ENCODE measurements at regions of chr5 and their contacts with region 1.

Region 1: DNA sequence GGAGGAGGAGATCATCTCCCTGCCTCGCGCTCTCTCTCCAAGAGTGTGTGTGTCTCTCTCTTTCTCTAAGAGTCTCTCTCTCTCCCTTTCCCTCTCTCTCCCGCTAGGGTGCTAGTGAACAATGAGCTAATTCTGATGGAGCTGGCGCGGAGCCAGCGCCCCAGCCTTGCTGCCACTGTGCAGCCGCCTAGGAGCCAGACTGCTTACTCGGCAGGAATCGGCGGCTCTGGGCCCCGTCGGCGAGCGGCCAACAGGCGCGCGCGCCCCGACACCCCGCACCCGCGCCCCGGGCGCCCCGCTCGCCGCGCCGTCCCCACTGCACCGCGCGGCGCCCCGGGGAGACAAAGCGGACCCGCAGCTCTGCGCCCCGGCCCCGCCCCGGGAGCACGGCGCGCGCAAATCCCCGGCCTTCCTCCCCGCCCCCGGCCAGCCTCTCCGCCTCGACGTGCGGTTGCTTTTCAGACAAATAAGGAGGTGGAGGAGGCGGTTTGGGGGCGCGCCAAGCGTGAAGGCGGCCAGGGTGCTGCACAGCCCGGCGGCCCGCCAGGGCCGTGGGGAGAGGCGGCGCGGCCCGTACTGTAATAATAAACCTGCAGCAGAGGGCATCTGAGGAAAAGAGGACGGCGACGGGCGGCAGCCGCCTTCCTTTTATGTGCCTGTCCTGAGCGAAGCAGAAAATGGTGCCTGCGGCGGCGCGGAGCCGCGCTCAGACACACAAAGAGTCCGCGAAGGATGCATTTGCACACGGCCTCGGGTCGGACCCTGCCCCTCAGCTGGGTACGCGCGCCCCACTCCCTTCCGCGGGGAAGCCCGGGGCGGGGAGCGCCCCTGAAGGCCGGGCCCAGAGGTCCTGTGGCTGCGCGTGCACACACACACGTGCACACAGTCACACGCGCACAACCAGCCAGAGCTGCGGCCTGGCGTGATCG is 625 bp upstream of the NREP start:
- DNase-seq: peak; percentile 66
- ATAC-seq: peak; percentile 85
- H3K4me3 ChIP-seq: peak overlapping the region; percentile 68
- H3K27ac ChIP-seq: peak overlapping the region; percentile 88
- H3K4me1 ChIP-seq: peaks cover 9% of the 10 kb centered on the region; the same call in 1 of the 2 replicates
- H3K27me3 ChIP-seq: no peaks in the 10 kb centered on the region
- CTCF ChIP-seq: peak in 2 of 3 experiments; percentile 29 to 58; a peak in 4 of 6 replicates
- EP300 ChIP-seq: no peak
- POLR2A ChIP-seq: peak; percentile 70
- RAD21 ChIP-seq: 0 out of 2 replicates have a peak, but pooled peaks have one; percentile 22

Region 2: DNA sequence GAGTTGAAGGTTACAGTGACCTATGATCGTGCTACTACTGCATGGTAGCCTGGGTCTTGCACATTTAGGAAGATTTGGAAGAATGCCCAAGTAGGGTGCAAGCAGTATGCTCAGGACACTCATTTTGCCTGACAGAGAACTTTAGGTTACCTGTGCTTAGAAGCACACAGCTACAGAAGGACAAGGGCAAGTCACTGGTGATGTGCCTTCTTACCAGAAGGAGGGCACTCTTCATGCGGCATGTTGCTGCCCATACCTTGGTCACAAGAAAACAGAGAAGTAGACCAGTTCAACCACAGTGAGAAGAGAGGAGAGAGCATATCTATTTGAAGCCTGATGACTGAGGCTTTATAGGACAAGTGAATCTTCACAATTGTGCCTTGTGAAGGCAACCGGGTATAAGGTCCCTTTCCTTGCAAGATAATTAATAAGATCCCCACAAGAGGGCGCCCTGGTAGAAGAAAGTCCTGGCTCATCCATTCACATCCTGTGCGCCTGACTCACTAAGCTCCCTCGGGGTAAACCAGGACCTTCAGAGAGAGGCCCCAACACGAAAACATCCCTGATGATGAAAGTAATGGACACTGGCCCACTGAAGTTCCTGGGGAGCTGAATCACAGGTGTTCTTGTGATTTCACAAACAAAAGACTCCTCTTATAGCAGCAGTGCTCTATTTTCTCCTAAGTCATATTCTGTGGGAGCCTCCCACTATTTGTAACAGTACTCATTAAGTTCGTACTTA is 207.2 kb before region 1 on chr5:
- CTCF ChIA-PET with region 1: interaction called, 18 read pairs
- POLR2A ChIA-PET with region 1: no interaction called
- RAD21 ChIA-PET with region 1: interaction called, 8 read pairs
- SMC1A ChIA-PET with region 1: interaction called, 4 read pairs
- in situ Hi-C with region 1: no loop called
- intact Hi-C with region 1: loop called (anchors 2 kb)
- DNase-seq: peak; percentile 50
- ATAC-seq: peak; percentile 99
- H3K4me3 ChIP-seq: no peak overlapping the region
- H3K27ac ChIP-seq: no peak overlapping the region
- H3K4me1 ChIP-seq: no peaks in the 10 kb centered on the region
- H3K27me3 ChIP-seq: no peaks in the 10 kb centered on the region
- CTCF ChIP-seq: peak; percentile 50 to 76 (median 56)
- EP300 ChIP-seq: no peak
- POLR2A ChIP-seq: no peak
- RAD21 ChIP-seq: peak; percentile 91

Region 3: DNA sequence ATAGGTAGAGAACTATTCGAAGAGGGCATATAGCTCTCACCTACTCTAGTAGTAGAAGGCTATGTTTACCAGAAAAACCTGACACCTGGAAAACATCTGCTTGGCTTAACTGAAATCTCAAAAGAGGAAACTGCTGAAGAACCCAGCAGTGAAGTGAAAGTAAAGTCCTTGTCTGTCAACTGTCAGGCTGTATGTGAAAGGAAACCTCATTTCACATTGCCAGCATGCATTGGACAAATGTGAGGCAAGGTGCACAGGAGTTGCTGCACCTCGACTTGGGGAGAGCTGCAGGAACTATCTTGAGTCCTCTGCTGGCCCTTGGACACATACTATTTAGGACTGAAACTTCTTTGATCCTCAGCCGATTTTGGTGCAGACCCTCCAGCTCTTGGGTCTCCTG is 54.0 kb before region 1 on chr5:
- CTCF ChIA-PET with region 1: interaction called, 3 read pairs
- POLR2A ChIA-PET with region 1: no interaction called
- RAD21 ChIA-PET with region 1: interaction called, 7 read pairs
- SMC1A ChIA-PET with region 1: interaction called, 13 read pairs
- in situ Hi-C with region 1: no loop called
- intact Hi-C with region 1: no loop called
- DNase-seq: peak; percentile 71
- ATAC-seq: peak; percentile 98
- H3K4me3 ChIP-seq: peak overlapping the region; percentile 29; the same call in 1 of the 2 replicates
- H3K27ac ChIP-seq: no peak overlapping the region
- H3K4me1 ChIP-seq: peaks cover 13% of the 10 kb centered on the region
- H3K27me3 ChIP-seq: no peaks in the 10 kb centered on the region
- CTCF ChIP-seq: no peak
- EP300 ChIP-seq: no peak
- POLR2A ChIP-seq: no peak
- RAD21 ChIP-seq: no peak

Region 4: GRCh38 chr5:111742177-111742994 is 15.2 kb before region 1 on chr5:
- CTCF ChIA-PET with region 1: interaction called, 8 read pairs
- POLR2A ChIA-PET with region 1: interaction called, 4 read pairs
- RAD21 ChIA-PET with region 1: interaction called, 6 read pairs
- SMC1A ChIA-PET with region 1: interaction called, 19 read pairs
- in situ Hi-C with region 1: no loop called
- intact Hi-C with region 1: no loop called
- DNase-seq: no peak
- ATAC-seq: peak; percentile 37
- H3K4me3 ChIP-seq: 0 out of 2 replicates have a peak overlapping the region, but pooled peaks have one; percentile 6
- H3K27ac ChIP-seq: no peak overlapping the region
- H3K4me1 ChIP-seq: peaks cover 9% of the 10 kb centered on the region
- H3K27me3 ChIP-seq: no peaks in the 10 kb centered on the region
- CTCF ChIP-seq: no peak
- EP300 ChIP-seq: no peak
- POLR2A ChIP-seq: no peak
- RAD21 ChIP-seq: no peak

Region 5: GRCh38 chr5:111774525-111774924 is 16.9 kb after region 1 on chr5:
- CTCF ChIA-PET with region 1: interaction called, 5 read pairs
- POLR2A ChIA-PET with region 1: interaction called, 11 read pairs
- RAD21 ChIA-PET with region 1: interaction called, 24 read pairs
- SMC1A ChIA-PET with region 1: interaction called, 17 read pairs
- in situ Hi-C with region 1: no loop called
- intact Hi-C with region 1: no loop called
- DNase-seq: no peak
- ATAC-seq: peak; percentile 33
- H3K4me3 ChIP-seq: no peak overlapping the region
- H3K27ac ChIP-seq: no peak overlapping the region
- H3K4me1 ChIP-seq: no peaks in the 10 kb centered on the region; the same call in 1 of the 2 replicates
- H3K27me3 ChIP-seq: no peaks in the 10 kb centered on the region
- CTCF ChIP-seq: no peak
- EP300 ChIP-seq: no peak
- POLR2A ChIP-seq: no peak
- RAD21 ChIP-seq: no peak

Region 6: GRCh38 chr5:111820072-111820471 is 62.5 kb after region 1 on chr5:
- CTCF ChIA-PET with region 1: no interaction called
- POLR2A ChIA-PET with region 1: no interaction called
- RAD21 ChIA-PET with region 1: interaction called, 4 read pairs
- SMC1A ChIA-PET with region 1: interaction called, 10 read pairs
- in situ Hi-C with region 1: no loop called
- intact Hi-C with region 1: no loop called
- DNase-seq: no peak
- ATAC-seq: no peak
- H3K4me3 ChIP-seq: no peak overlapping the region
- H3K27ac ChIP-seq: no peak overlapping the region
- H3K4me1 ChIP-seq: no peaks in the 10 kb centered on the region
- H3K27me3 ChIP-seq: no peaks in the 10 kb centered on the region
- CTCF ChIP-seq: 0 out of 6 replicates have a peak, but pooled peaks of 1 of the 3 experiments have one; percentile 4
- EP300 ChIP-seq: no peak
- POLR2A ChIP-seq: no peak
- RAD21 ChIP-seq: no peak

Region 7: DNA sequence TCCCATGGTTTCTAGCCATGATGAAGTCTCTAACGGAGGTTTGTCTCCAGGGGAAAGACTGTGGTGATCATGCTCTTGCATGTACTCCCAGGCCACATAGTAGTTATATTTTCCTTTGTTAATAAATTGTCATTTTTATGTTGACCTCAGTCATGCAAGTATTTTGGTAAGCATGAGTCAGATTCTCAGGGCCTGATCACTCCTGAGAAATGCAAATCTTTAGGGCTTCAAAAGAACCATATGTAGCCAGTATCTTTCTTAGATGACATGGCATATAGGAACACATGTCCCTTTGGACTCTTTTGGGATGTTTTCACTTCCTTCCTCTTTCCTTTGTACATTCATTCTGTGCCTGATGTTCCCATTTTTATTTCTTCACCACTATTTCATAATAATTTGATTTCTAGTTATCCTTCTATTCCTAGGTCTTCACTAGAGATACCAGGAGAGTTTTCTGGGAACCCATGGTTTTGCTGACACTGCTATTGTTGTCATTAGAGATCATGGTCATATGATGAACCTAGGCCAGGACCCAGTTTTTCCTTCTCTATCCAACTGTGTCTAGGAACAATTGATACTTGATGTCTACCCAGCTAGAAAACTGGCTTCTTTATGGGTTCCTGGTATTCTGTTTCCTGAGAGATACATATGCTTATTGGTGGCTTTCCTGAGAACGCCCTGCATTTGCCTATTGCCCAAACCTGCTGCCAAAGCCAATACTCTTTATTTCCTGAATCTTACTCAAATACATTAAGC is 247.4 kb after region 1 on chr5:
- CTCF ChIA-PET with region 1: no interaction called
- POLR2A ChIA-PET with region 1: no interaction called
- RAD21 ChIA-PET with region 1: no interaction called
- SMC1A ChIA-PET with region 1: no interaction called
- in situ Hi-C with region 1: no loop called
- intact Hi-C with region 1: loop called (anchors 10 kb)
- DNase-seq: peak; percentile 53
- ATAC-seq: peak; percentile 90
- H3K4me3 ChIP-seq: no peak overlapping the region
- H3K27ac ChIP-seq: peak overlapping the region; percentile 8; the same call in 1 of the 2 replicates
- H3K4me1 ChIP-seq: peaks cover 7% of the 10 kb centered on the region
- H3K27me3 ChIP-seq: no peaks in the 10 kb centered on the region
- CTCF ChIP-seq: no peak
- EP300 ChIP-seq: peak in 1 of 2 experiments; percentile 9; a peak in 2 of 4 replicates
- POLR2A ChIP-seq: no peak
- RAD21 ChIP-seq: no peak

Measured in GM12878 (cell line).